ENCODE measurements at regions of chr11 and their contacts with region 1.

Region 1: DNA sequence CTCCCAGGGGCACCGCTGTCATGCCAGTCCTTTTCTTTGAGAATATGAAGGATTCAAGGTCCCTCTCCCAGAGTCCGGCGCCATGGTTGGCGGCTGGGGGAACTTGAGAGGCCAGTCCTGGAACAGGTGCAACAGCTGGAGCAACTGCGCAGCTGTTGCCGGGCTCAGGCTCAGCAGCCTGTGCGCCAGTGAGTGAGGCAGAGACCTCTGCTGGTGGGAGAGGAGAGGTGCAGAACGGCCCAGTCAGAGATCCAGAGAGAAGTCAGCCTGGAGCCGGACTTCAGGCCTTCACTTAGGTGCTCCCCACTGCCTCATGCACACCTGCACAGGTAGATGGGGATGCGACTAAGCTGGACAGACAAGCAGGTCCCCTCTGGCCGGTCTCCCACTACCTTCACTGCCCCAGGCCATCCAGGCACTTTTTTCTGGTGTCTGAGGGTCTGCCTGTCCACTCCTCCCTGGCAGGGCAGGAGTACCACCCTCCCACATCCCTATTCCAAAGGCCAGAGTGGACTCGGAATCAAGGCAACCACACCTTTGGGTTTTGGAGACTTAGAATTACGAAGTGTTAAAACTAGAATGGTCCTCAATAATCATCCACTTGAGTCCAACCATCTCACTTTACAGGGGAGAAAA is 4.6 kb downstream of the CHRDL2 start:
- DNase-seq: peak; percentile 60 to 91
- H3K4me3 ChIP-seq: no peak overlapping the region
- CTCF ChIP-seq: peak in 1 of 3 donors; percentile 71
- POLR2A ChIP-seq: no peak

Region 2: GRCh38 chr11:74380746-74381430 is 345.8 kb before region 1 on chr11:
- intact Hi-C with region 1: no loop called
- DNase-seq: no peak
- H3K4me3 ChIP-seq: no peak overlapping the region
- CTCF ChIP-seq: no peak
- POLR2A ChIP-seq: no peak

Region 3: GRCh38 chr11:74634537-74634936 is 92.1 kb before region 1 on chr11:
- intact Hi-C with region 1: loop called (anchors 10 kb)
- DNase-seq: no peak
- H3K4me3 ChIP-seq: no peak overlapping the region
- CTCF ChIP-seq: no peak
- POLR2A ChIP-seq: no peak

Region 4: DNA sequence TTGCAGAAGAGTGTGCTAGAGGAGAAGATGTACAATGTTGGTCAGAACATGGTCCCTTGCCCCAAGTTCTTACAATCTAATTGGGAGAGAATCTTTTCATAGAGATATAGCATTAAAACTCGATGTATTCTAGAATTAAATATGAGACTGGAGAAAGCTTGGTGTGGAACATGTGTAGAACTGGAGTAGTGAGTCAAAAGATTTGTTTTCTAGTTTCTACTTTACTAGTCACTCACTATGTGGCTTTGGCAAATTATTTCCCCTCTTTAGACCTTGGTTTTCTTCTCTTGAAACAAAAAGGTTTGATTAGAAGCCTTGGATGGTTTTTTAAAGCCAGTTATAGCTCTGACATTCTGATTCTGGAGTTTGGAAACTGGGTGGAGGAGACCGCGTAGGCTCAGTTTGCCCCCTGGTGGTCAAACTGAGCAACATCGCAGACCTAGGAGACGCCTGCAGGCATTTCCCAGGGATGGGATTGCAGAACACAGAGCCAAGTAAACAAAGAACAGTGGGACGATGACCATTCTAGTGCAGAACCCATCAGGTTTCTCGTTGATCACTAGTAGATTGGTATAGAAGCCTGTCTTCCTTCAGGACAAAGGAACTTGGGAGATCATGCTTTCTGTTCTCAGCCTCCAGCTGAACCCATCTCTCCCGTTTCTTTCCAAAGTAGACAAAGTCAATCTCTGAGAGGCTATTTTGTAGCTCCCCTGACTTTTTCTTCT is 13.0 kb after region 1 on chr11:
- intact Hi-C with region 1: loop called (anchors 1 kb)
- DNase-seq: peak in 1 of 2 donors; percentile 84
- H3K4me3 ChIP-seq: no peak overlapping the region
- CTCF ChIP-seq: peak in 1 of 3 donors; percentile 18
- POLR2A ChIP-seq: no peak